ENCODE measurements at regions of chr19 and their contacts with region 1.

Region 1: DNA sequence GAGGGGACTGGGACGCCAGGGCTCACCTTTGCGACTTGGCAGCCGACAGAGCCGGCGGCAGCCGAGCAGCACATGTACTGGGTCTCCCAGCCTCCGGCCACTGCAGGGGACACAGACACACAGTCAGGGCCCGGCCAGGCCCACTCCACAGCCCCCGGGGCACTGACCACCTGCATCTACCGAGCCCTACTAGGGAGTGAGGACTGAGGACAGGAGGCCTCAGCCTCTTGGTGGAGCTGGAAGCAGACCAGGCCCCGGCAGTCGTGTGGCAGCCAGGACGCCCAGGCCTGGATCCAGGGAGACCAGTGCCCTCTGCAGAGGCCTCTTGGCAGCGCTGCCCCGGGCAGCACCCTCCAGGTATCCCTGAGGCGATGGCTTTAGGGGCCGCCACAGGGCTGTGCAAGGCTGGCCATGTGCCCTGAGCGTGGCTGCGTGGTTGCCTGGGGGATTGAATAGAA is 5.6 kb upstream of the ATP8B3 start:
- DNase-seq: no peak
- H3K4me3 ChIP-seq: no peak overlapping the region
- H3K4me3 Mint-ChIP-seq: no peak overlapping the region
- H3K27ac Mint-ChIP-seq: no peak overlapping the region
- H3K4me1 ChIP-seq: no peaks in the 10 kb centered on the region
- H3K4me1 Mint-ChIP-seq: no peaks in the 10 kb centered on the region
- H3K27me3 ChIP-seq: no peaks in the 10 kb centered on the region
- H3K27me3 Mint-ChIP-seq: no peaks in the 10 kb centered on the region
- CTCF ChIP-seq: no peak

Region 2: GRCh38 chr19:1599460-1599846 is 218.3 kb before region 1 on chr19:
- CTCF ChIA-PET with region 1: no interaction called
- POLR2A ChIA-PET with region 1: no interaction called
- intact Hi-C with region 1: no loop called
- DNase-seq: no peak
- H3K4me3 ChIP-seq: no peak overlapping the region
- H3K4me3 Mint-ChIP-seq: no peak overlapping the region
- H3K27ac Mint-ChIP-seq: no peak overlapping the region
- H3K4me1 ChIP-seq: peaks cover 8% of the 10 kb centered on the region; the same call in 1 of the 2 replicates
- H3K4me1 Mint-ChIP-seq: no peaks in the 10 kb centered on the region
- H3K27me3 ChIP-seq: no peaks in the 10 kb centered on the region
- H3K27me3 Mint-ChIP-seq: no peaks in the 10 kb centered on the region
- CTCF ChIP-seq: no peak

Region 3: GRCh38 chr19:1774999-1775772 is 42.5 kb before region 1 on chr19:
- CTCF ChIA-PET with region 1: interaction called, 11 read pairs
- POLR2A ChIA-PET with region 1: no interaction called
- intact Hi-C with region 1: no loop called
- DNase-seq: peak in 1 of 2 experiments; percentile 56
- H3K4me3 ChIP-seq: no peak overlapping the region
- H3K4me3 Mint-ChIP-seq: no peak overlapping the region
- H3K27ac Mint-ChIP-seq: no peak overlapping the region
- H3K4me1 ChIP-seq: no peaks in the 10 kb centered on the region
- H3K4me1 Mint-ChIP-seq: no peaks in the 10 kb centered on the region
- H3K27me3 ChIP-seq: no peaks in the 10 kb centered on the region
- H3K27me3 Mint-ChIP-seq: peaks cover 16% of the 10 kb centered on the region
- CTCF ChIP-seq: peak; percentile 39 to 83

Measured in Caco-2 (cell line).